ENCODE measurements at regions of chr14 and their contacts with region 1.

Region 1: GRCh38 chr14:93892923-93893558 is 34.1 kb upstream of the FAM181A start:
- DNase-seq: peak; percentile 78
- H3K4me3 ChIP-seq: peak overlapping the region in 1 of 2 experiments; percentile 25; a peak in 2 of 4 replicates
- H3K27ac ChIP-seq: peak overlapping the region in 1 of 2 experiments; percentile 99; a peak in 2 of 4 replicates
- H3K4me1 ChIP-seq: peaks cover 0 to 62% of the 10 kb centered on the region in 2 experiments; a peak in 2 of 4 replicates
- H3K27me3 ChIP-seq: no peaks in the 10 kb centered on the region; the same call in 1 of the 2 replicates
- CTCF ChIP-seq: peak; percentile 95
- EP300 ChIP-seq: no peak
- RAD21 ChIP-seq: peak; percentile 75

Region 2: DNA sequence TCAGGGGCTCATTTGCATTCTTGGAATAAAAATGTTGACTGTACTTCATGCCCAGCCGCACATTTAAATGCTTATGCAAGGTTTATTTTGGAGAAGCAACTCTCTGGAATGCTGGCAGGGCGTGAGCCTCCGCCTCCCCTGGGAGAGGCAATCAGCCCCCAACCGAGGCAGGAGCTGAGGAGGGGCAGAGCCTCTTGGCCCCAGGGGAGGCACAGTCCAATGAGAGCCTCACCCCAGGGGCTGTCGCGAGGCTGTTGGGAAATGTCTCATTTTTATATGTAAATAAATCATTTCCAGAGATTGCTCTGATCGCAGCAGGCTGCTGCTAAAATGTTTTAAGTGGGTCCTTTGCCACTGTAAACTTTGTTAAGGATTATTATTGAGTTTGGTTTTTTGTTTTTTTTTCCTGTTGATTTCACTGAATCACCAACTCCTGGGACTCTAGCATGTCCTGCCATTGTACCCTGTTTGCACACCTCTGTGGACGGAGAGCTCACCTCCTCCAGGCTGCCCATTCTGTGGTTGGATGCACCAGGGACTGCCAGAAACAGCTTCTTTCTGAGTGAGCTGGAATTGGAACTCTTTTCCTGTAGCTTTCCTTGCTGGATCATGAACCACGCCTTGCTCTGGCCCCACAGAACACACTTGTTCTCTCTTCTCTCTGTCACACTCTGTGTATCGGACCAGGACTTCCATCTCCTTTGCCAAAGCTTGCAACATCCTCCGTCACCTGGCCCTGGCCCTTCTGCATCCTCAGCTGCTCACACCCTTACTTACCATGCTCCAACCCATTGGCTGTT is 12.8 kb before region 1 on chr14:
- CTCF ChIA-PET with region 1: interaction called, 12 read pairs
- POLR2A ChIA-PET with region 1: no interaction called
- DNase-seq: no peak
- H3K4me3 ChIP-seq: no peak overlapping the region
- H3K27ac ChIP-seq: no peak overlapping the region
- H3K4me1 ChIP-seq: no peaks in the 10 kb centered on the region; a peak in 1 of 4 replicates
- H3K27me3 ChIP-seq: no peaks in the 10 kb centered on the region
- CTCF ChIP-seq: no peak
- EP300 ChIP-seq: no peak
- RAD21 ChIP-seq: no peak